ENCODE measurements at regions of chr4 and their contacts with region 1.

Region 1: DNA sequence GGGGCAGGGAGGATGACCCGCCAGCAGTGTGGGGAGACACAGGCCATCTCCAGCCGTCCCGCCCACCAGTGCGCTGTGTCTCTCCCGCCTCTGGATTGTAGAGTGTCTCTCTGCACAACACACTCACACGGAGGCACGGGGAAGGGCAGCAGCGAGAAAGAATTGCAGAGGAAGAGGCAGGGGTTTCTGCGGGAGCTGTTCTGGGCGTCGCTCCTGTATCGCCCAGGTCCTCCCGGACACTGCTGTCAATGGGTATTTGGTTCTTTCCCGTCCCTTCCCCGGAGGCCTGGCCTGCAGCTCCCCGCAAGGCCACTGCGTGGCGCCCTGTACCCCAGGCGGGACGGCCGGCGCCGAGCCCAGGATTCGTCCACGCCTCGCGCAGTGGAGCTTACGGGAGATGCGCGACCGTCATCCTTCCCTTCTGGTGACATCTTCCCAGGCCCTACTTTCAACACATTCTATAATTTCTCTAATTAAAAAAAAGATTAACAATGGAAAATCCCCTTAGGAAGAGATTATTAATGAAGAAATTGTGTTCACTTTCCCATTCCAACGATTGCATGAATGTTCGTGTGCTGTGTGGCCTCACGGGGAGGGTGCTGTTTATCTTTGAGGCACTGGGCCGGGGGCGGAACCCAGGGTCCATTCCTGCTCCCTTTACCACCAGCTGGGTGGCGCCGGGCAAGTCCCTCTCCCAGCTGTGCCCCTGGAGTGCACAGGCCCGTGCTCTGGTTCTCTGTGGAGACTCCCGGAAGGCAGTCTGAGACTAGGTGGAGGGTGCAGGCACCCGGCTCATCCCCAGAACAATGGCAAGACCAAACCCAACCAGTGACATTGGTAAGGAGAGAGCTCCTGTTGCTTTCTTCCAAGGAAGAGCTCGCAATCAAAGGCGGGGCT is 95.7 kb downstream of the CPZ start:
- ATAC-seq: peak; percentile 63 to 97 (median 93)
- H3K4me3 ChIP-seq: no peak overlapping the region
- H3K27ac ChIP-seq: no peak overlapping the region
- H3K4me1 ChIP-seq: no peaks in the 10 kb centered on the region

Region 2: GRCh38 chr4:8886612-8887406 is 198.5 kb after region 1 on chr4:
- in situ Hi-C with region 1: loop called in 2 of 9 experiments (anchors 25 kb)
- ATAC-seq: peak in 2 of 8 experiments; percentile 71 to 87
- H3K4me3 ChIP-seq: no peak overlapping the region
- H3K27ac ChIP-seq: no peak overlapping the region
- H3K4me1 ChIP-seq: no peaks in the 10 kb centered on the region

Region 3: GRCh38 chr4:8917868-8918783 is 229.8 kb after region 1 on chr4:
- in situ Hi-C with region 1: loop called in 1 of 9 experiments (anchors 25 kb)
- ATAC-seq: peak; percentile 79 to 96 (median 90)
- H3K4me3 ChIP-seq: no peak overlapping the region
- H3K27ac ChIP-seq: no peak overlapping the region
- H3K4me1 ChIP-seq: no peaks in the 10 kb centered on the region

Measured in motor neuron (in vitro differentiated cells).